Naive thymus-derived CD8-positive, alpha-beta T cell (primary cell): ENCODE measurements at regions of chr9 and their contacts with region 1.

Region 1: DNA sequence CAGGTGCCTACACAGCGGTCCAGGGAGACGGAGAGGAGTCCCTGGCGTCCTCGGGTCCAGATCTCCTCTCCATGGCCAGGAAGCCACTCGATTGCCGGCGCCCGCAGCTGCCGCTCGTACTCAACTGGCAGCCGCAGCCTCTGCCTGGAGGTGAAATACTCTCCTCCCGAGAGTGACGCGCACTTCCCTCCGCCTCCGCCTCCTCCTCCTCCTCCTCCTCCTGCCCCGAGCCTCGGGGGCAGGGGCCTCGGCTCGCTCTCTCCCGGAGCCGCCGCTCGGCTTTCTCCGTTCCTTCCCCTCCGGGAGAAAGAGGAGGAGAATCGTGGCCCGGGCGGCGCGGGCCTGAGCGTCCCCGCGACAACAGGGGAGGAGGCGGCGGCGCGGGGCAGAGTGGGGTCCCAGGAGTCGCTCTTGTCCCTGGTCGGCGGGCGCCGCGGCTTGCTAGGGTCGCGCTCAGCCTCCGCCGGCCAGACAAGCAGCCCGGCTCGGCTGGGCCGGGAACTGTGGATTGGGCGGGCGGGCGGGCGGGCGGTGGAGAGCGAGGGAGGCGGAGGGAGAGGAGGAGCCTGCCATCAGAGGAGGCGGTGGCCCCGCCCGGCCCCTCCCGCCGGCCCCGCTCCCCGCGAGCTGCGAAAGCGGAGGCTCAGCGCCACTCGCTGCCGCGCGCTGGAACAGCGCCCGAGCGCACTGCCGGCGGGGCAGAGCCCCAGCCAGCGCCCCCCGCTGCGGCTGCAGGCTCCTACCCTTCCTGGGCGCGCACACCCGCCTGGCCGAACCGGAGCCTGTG is at the start of gene CEMIP2:
- DNase-seq: peak; percentile 84 to 93 (median 88)
- ATAC-seq: peak; percentile 82
- H3K4me3 Mint-ChIP-seq: peak within 1 kb of the TSS; percentile 91 to 99 (median 96)
- H3K27ac Mint-ChIP-seq: peak within 1 kb of the TSS; percentile 90 to 99 (median 98)
- H3K4me1 Mint-ChIP-seq: peaks cover 34 to 50% (median 42%) of the 10 kb centered on the region in 4 donors
- H3K27me3 Mint-ChIP-seq: no peaks in the 10 kb centered on the region
- polyA plus RNA-seq, gene CEMIP2: 5.9 to 12.9 (median 10.2) TPM

Region 2: DNA sequence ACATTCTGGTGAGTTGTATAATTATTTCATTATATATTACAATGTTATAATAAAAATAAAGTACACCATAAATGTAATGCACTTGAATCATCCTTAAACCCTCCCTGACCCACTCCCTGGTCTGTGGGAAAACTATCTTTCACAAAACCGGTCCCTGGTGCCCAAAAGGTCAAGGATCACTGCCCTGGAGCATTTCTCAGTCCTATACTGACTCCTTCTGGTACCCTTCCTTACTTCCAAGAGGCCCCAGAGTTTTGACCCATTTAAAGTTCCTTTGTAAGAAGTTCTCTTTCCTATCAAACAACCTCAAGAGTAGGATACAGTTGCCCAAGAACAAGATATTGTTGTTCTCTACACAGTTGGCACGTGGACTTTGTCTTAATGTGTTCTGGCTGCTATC is 558.3 kb before region 1 on chr9:
- POLR2A ChIA-PET with region 1: no interaction called
- DNase-seq: no peak
- ATAC-seq: no peak
- H3K4me3 Mint-ChIP-seq: no peak overlapping the region
- H3K27ac Mint-ChIP-seq: no peak overlapping the region
- H3K4me1 Mint-ChIP-seq: no peaks in the 10 kb centered on the region
- H3K27me3 Mint-ChIP-seq: peaks cover 0 to 3% (median 0%) of the 10 kb centered on the region in 5 donors

Region 3: DNA sequence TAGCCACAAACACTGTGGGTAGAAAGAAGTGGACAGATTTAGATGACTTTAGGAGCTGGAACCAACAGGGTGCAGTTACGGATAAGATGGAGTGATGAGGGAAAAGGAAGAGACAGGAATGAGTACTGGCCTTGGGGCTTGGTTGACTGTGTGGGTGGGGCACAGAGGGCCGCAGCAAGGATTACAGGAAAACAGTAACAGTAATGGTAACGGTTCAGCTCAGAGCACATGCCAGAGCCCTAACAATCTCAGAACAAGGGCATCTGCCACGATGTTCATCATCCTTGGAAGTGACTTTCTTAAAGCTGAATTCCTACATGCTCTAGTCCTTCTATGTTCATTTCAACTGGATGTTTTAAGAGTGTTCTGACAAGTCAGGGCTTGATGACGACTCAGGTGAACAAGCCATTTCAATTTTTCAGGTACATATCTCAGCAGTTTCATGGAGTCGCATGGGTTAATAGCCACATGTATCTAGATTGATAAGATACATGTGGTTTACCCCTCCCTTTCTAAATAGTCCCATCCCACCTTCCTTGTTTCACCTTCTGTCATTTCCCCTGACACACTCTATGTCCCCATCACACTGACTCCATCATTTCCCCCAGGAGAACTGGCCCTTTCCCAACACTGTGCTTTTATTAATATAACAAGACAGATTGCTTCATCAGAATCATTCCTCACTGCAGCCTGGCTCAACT is 65.3 kb before region 1 on chr9:
- POLR2A ChIA-PET with region 1: no interaction called
- DNase-seq: no peak
- ATAC-seq: no peak
- H3K4me3 Mint-ChIP-seq: no peak overlapping the region
- H3K27ac Mint-ChIP-seq: peak overlapping the region in 2 of 10 donors; percentile 27 to 35
- H3K4me1 Mint-ChIP-seq: peaks cover 0 to 10% (median 7%) of the 10 kb centered on the region in 4 donors
- H3K27me3 Mint-ChIP-seq: no peaks in the 10 kb centered on the region

Region 4: DNA sequence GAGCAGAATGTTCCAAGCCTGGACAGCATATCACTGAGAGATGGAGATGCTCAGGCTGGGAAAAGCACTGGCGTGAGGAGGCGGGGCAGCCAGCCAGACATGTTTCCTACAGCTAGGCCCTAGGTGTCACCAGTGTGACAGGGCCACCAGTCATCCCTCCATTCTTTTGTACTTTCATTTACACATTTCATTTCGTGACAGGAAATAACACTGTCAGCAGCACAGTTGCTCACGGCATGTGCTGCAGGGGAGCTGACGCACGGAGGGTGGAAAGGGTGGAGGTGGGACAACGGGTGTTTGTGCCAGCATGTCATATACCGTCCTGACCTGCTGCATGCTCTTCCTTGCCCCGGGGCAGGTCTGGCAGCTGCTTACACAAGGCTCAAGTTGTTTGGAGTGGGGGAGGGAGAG is 14.5 kb after region 1 on chr9:
- POLR2A ChIA-PET with region 1: interaction called, 64 read pairs
- DNase-seq: peak; percentile 64 to 93 (median 87)
- ATAC-seq: peak; percentile 95
- H3K4me3 Mint-ChIP-seq: peak overlapping the region; percentile 62 to 80 (median 78)
- H3K27ac Mint-ChIP-seq: peak overlapping the region; percentile 95 to 100 (median 99)
- H3K4me1 Mint-ChIP-seq: peaks cover 26 to 54% (median 53%) of the 10 kb centered on the region in 4 donors
- H3K27me3 Mint-ChIP-seq: no peaks in the 10 kb centered on the region

Region 5: DNA sequence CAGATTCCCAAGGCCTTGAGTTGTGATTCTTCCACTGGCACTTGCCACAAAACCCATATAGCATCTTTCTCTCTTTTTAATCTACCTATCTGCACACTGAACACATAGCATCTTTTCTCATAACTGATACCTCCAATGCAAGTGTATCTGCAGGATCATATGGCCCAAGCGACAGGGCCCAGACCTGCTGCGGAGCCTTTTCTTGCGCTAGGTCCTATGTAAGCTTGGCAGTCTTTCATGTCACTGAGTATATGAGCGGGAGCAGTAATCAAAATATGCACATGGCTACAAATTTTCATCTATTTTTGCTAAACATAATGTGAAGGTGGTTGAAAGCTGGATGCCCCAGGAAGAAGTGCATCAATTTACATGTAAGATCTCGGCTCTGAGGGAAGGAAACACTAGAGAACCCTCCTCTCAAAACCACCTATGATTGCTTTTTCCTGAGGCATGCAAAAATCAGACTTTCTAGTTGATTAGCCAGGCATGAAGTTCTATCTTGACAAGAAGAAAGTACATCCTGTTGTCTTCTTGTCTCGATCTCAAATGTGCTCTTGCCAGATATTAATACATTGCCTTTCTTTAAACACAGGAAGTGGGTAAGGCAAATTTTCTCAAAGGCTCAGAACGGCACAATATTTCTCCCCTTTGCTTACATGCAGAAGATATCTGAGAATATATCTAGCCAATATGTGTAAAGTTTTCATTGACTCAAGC is 26.7 kb after region 1 on chr9:
- POLR2A ChIA-PET with region 1: interaction called, 41 read pairs
- DNase-seq: peak in 6 of 10 donors; percentile 15 to 84 (median 64)
- ATAC-seq: peak; percentile 89 to 92
- H3K4me3 Mint-ChIP-seq: peak overlapping the region; percentile 34 to 78 (median 74)
- H3K27ac Mint-ChIP-seq: peak overlapping the region; percentile 93 to 99 (median 98)
- H3K4me1 Mint-ChIP-seq: peaks cover 35 to 72% (median 71%) of the 10 kb centered on the region in 4 donors
- H3K27me3 Mint-ChIP-seq: no peaks in the 10 kb centered on the region

Region 6: GRCh38 chr9:71806901-71807307 is 38.3 kb after region 1 on chr9:
- POLR2A ChIA-PET with region 1: interaction called, 15 read pairs
- DNase-seq: peak in 9 of 10 donors; percentile 16 to 73 (median 50)
- ATAC-seq: peak; percentile 88 to 96
- H3K4me3 Mint-ChIP-seq: no peak overlapping the region
- H3K27ac Mint-ChIP-seq: peak overlapping the region in 9 of 10 donors; percentile 23 to 84 (median 63)
- H3K4me1 Mint-ChIP-seq: peaks cover 6 to 14% (median 11%) of the 10 kb centered on the region in 4 donors
- H3K27me3 Mint-ChIP-seq: no peaks in the 10 kb centered on the region

Region 7: DNA sequence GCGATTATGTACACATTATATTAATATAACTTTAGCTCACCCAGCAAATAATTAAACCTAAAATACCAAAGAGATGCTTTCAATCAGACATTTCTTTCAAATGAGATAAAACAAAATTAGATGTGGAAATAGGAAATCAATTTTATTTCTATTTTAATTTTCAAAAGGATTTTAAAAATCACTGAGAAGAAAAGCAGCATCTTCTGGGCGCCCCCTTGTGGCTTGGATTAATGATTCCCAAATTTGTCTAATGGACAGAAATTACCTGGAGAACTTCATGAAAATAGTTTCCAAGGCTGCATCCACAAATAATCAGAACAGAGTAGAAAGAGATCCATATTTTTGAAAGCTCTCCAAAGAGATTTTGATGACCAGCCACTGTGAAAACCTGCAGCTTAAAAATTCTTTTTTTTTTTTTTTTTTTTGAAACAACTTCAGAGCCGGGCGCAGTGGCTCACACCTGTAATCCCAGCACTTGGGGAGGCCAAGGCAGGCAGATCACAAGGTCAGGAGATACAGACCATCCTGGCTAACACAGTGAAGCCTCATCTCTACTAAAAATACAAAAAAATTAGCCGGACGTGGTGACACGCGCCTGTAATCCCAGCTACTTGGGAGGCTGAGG is 50.6 kb after region 1 on chr9:
- POLR2A ChIA-PET with region 1: interaction called, 20 read pairs
- DNase-seq: peak; percentile 16 to 66 (median 44)
- ATAC-seq: no peak
- H3K4me3 Mint-ChIP-seq: no peak overlapping the region
- H3K27ac Mint-ChIP-seq: no peak overlapping the region
- H3K4me1 Mint-ChIP-seq: peaks cover 11 to 24% (median 19%) of the 10 kb centered on the region in 4 donors
- H3K27me3 Mint-ChIP-seq: no peaks in the 10 kb centered on the region

Region 8: DNA sequence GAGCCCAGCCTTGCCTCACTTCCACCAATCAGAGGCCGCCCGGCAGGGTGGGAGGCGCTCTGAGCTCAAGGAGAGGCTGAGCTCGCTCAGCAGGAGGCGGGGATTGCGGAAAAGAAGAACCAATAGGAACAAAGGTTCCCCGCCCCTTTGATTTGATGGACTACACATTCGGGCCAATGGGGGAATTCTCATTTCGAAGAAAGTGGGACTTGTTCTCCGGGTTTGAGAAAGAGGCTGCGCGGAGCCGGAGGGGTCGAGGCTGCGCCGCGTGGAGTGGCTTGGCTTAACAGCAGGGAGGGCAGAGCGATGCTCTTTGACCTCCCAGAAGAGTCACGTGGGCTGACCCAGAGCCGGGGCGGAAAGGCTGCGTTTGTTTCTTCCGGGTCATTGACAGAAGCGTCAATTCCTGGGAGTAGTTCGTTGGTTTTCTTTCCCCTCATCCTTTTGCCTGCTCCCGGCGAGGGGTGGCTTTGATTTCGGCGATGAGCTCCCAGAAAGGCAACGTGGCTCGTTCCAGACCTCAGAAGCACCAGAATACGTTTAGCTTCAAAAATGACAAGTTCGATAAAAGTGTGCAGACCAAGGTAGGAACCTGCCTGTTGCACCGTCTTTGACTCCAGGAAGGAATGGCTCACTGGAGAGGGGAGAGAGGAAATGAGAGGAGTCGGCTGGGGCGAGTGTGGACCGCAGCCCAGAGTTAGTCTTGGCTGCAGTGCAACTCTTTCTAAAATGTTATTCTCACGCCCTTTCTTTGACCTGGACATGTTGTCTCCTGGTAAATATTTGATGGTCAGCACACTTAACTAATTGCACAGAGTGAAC is 142.9 kb after region 1 on chr9 and contains the start of gene C9orf85:
- POLR2A ChIA-PET with region 1: interaction called, 10 read pairs
- DNase-seq: peak; percentile 89 to 99 (median 96)
- ATAC-seq: peak; percentile 92 to 93
- H3K4me3 Mint-ChIP-seq: peak within 1 kb of the TSS; percentile 97 to 100 (median 100)
- H3K27ac Mint-ChIP-seq: peak within 1 kb of the TSS; percentile 94 to 98 (median 98)
- H3K4me1 Mint-ChIP-seq: peaks cover 33 to 75% (median 68%) of the 10 kb centered on the region in 4 donors
- H3K27me3 Mint-ChIP-seq: no peaks in the 10 kb centered on the region
- polyA plus RNA-seq, gene C9orf85: 7.8 to 11.1 (median 10.4) TPM